Psoas muscle (tissue), 8 donors: ENCODE measurements at regions of chr7 and their contacts with region 1.

Region 1: DNA sequence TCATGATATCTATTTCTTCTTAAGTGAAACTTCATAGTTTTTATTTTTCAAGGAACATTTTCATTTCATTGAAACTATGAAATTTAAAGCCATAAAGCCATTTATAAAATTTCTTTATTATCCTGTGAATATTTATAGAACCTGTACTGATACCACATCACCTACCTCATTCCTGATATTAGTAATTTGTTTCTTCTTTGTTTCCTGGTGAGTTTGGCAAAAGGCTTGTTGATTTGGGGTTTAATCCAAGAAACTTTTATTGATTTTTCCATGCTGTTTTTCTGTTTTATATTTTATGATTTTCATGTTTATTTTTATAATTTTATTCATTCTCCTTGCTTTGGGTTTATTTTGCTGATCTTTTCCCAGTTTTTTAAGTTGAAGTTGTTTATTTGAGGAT is 669.4 kb downstream of the NXPH1 start:
- DNase-seq: no peak
- ATAC-seq: no peak
- H3K4me3 ChIP-seq: no peak overlapping the region
- H3K27ac ChIP-seq: no peak overlapping the region
- H3K4me1 ChIP-seq: no peaks in the 10 kb centered on the region
- H3K27me3 ChIP-seq: no peaks in the 10 kb centered on the region
- CTCF ChIP-seq: no peak

Region 2: DNA sequence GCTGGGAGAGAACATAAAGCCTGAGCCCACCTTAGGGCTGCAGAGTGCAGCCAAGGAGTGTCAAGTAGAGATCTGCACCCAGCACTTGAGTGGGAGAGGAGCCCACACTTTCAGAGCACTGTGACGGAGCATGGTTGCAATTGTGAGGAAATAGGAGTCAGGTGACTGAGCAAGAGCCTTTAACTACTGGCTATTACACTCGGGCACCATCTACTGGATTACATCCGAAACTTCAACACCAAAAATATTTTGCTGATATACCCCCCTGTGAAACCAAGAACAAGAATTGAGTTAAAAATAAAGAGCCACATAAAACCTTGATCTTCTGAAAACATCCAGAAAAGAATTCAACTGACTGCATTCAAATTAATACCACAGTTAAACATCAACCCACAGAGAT is 11.6 kb before region 1 on chr7:
- intact Hi-C with region 1: loop called in 1 of 2 experiments (anchors 1 kb)
- DNase-seq: no peak
- ATAC-seq: no peak
- H3K4me3 ChIP-seq: no peak overlapping the region
- H3K27ac ChIP-seq: no peak overlapping the region
- H3K4me1 ChIP-seq: no peaks in the 10 kb centered on the region
- H3K27me3 ChIP-seq: no peaks in the 10 kb centered on the region
- CTCF ChIP-seq: no peak